ENCODE measurements at regions of chr16 and their contacts with region 1.

Region 1: GRCh38 chr16:81737885-81738786 is 41.0 kb upstream of the PLCG2 start:
- DNase-seq: peak; percentile 93
- H3K4me3 ChIP-seq: peak overlapping the region; percentile 14
- H3K27ac ChIP-seq: no peak overlapping the region
- H3K4me1 ChIP-seq: no peaks in the 10 kb centered on the region
- H3K27me3 ChIP-seq: no peaks in the 10 kb centered on the region
- CTCF ChIP-seq: peak; percentile 78

Region 2: DNA sequence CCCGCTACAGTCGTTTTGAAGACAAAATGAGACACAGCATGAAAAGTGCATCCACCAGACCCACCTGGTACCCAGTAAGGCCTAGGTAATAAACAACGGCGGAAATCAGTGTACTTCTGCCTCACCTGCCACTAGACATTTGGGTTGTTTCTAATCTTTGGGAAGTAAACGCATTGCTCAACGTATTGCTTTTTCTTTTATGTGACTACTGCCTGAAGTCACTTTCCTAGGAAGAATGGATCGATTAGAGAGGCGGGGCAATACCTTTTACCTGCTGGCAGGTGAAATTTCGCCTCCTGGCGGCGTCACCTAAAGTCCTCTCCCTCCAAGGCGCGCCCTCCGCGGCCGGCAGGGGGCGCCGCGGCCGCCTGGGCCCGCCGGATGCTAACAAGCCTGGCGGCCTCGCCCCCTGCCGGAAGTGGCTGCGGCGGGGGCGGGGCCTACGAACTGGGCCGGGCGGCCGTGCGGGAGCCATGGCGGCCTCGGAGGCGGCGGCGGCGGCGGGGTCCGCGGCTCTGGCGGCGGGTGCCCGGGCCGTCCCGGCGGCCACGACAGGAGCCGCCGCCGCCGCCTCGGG is 702.6 kb before region 1 on chr16 and contains the start of gene ATMIN:
- intact Hi-C with region 1: loop called (anchors 10 kb)
- DNase-seq: peak; percentile 87
- H3K4me3 ChIP-seq: peak within 1 kb of the TSS; percentile 73
- H3K27ac ChIP-seq: no peak within 1 kb of the TSS
- H3K4me1 ChIP-seq: no peaks in the 10 kb centered on the region
- H3K27me3 ChIP-seq: no peaks in the 10 kb centered on the region
- CTCF ChIP-seq: peak; percentile 79
- total RNA-seq, gene ATMIN: 23.9 to 26.3 TPM

Region 3: DNA sequence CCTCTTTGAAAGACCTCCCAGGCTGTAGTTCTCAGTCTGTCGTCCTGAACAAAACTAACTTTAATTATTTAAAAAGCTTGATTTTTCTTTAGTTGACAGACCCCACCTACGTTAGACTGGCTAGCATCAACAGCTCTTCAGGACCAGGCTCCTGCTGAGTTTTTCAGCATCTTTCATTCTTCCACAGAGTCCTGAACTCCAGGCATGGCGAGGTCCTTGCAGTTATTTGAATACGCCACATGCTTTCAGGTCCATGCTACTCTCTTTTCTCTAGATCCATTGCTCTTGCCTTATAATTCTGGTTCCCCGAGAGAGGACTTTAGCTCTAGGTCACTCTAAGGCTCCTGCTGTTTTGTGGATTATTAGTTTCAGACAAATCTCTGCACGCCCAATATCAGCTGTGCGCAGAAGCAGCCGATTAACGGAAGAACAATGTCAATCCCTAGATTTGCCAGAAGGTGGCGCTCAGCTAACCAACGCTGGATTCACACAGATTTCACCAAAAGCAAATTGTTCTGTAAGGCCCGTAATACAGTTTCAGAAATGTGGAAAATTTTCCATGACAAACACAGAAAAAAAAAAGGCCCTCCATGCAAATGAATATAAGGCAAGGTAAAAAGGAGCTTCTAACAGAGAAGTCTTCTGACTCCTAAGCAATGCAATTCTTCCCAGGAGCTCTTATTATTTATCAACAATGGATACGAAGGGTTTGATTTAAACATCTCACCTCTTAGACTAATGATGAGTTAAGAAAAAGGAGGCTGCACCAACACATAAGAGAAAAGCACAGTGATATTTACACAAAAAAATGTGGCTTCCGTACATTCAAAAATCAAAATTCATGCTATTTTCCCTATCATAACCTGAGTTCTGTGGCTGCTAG is 533.1 kb before region 1 on chr16:
- intact Hi-C with region 1: loop called (anchors 5 kb)
- DNase-seq: peak; percentile 30
- H3K4me3 ChIP-seq: no peak overlapping the region
- H3K27ac ChIP-seq: no peak overlapping the region
- H3K4me1 ChIP-seq: no peaks in the 10 kb centered on the region
- H3K27me3 ChIP-seq: no peaks in the 10 kb centered on the region
- CTCF ChIP-seq: peak; percentile 58

Region 4: GRCh38 chr16:81752225-81752875 is 14.2 kb after region 1 on chr16:
- intact Hi-C with region 1: no loop called
- DNase-seq: peak; percentile 43
- H3K4me3 ChIP-seq: no peak overlapping the region
- H3K27ac ChIP-seq: peak overlapping the region; percentile 33
- H3K4me1 ChIP-seq: no peaks in the 10 kb centered on the region
- H3K27me3 ChIP-seq: no peaks in the 10 kb centered on the region
- CTCF ChIP-seq: no peak

Region 5: DNA sequence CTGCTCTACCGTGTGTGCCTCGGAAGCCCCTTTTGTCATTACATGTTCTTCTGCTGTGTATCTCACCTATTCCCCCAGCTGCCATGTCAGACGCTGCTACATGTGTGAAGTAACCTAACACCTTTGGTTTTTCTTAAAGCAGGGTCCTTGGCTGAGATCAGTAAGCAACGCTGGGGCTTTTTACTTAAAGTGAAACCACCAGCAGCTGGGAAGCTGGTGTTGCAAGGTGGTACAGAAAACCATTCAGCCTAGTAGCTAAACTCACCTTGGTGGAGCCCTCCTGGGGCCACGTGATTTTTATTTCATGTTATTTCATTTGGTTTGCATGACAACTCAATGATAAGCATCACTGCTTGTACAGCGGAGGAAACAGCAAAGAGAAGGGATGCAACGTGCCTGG is 103.6 kb after region 1 on chr16:
- intact Hi-C with region 1: no loop called
- DNase-seq: no peak
- H3K4me3 ChIP-seq: no peak overlapping the region
- H3K27ac ChIP-seq: no peak overlapping the region
- H3K4me1 ChIP-seq: no peaks in the 10 kb centered on the region
- H3K27me3 ChIP-seq: no peaks in the 10 kb centered on the region
- CTCF ChIP-seq: no peak

Measured in colonic mucosa (tissue), 4 donors.